Mammary epithelial cell (primary cell): ENCODE measurements at regions of chr9 and their contacts with region 1.

Region 1: GRCh38 chr9:129333953-129334724 is 156.1 kb upstream of the IER5L start:
- DNase-seq: peak; percentile 97
- H3K4me3 ChIP-seq: peak overlapping the region; percentile 31 to 41 (median 37)
- H3K27ac ChIP-seq: peak overlapping the region; percentile 88
- H3K4me1 ChIP-seq: peaks cover 48% of the 10 kb centered on the region
- H3K27me3 ChIP-seq: no peaks in the 10 kb centered on the region
- CTCF ChIP-seq: no peak

Region 2: DNA sequence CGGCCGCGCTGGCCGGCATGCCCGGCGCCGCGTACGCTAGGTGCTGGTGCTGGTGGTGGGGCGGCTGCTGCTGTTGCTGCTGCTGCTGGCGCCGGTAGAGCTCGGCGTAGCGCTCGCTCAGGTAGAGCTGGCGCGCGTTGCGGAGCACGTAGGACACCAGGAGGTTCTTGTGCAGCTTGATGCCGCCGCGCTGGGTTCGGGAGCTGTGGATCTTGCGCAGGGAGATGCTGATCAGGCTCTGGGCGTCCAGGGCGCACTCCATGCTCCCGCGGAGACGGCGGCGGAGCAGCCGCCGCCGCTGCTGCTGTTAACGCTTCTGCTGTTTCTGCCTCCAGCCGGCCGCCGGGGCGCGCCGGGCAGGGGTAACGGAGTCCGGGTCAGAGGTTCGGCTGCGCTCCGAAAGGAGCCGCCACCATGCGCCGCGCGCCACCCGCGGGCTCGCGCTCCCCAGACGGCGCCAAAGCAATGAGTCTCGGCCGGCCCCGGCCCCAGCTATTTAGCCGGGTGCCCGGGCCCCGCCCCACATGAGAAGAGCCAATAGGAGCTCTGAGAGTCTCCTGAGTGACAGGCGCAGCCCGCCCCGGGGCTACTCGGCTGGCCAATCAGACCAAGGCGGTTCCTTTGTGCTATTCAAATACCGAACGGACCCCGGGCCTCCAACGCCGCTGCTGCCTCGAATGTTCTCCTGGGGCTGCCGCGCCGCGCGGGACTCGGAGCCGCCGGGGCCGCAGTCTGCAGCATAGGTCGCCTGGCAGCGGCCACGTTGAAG is 156.2 kb before region 1 on chr9 and contains the start of gene IER5L:
- CTCF ChIA-PET with region 1: no interaction called
- dilution Hi-C with region 1: no loop called
- in situ Hi-C with region 1: loop called in 1 of 2 experiments (anchors 5 kb)
- intact Hi-C with region 1: loop called (anchors 1 kb)
- DNase-seq: peak; percentile 90
- H3K4me3 ChIP-seq: peak within 1 kb of the TSS; percentile 89 to 97 (median 97)
- H3K27ac ChIP-seq: no peak within 1 kb of the TSS
- H3K4me1 ChIP-seq: peaks cover 32% of the 10 kb centered on the region
- H3K27me3 ChIP-seq: no peaks in the 10 kb centered on the region
- CTCF ChIP-seq: peak in 1 of 2 donors; percentile 8
- total RNA-seq, gene IER5L: 13.5 to 34.2 TPM

Region 3: DNA sequence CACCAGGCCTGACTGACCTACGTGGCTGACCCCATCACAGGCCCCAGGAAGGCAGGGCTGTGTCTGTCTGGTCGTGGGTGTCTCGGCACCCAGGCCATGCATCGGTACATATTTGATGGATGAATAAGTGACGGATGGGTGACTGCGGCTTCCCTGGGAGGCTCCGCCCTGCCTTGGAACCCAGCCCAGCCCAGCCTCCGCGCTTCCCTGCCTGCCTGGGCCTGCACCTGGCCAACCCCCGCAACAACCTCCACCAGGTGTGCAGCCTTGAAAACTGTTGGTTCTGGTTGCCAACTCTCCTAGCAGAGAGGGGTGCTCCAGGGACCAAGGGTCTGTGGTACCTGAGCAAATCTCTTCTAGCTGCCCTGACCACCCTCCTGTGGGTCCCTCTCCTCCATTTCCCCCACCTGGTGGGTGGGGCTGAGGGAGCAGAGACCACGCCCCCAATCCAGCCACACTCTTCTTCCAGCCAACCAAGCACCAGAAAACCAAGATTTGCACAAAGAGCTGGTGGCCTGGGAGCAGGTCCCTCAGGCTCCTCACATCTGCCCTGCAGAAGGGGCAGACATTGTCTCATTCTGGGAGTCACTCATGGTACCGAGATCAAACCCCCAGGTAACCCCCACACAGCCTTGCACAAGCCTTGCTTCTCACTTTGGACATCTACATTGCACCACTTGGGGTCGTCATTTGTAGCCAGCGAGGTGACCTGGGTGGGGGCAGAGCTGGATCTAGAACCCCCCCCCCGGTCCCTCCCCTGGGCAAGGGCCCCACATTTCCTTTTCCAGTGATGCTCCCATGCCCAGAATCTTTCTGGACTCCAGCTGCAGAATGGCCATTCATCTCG is 55.5 kb before region 1 on chr9:
- CTCF ChIA-PET with region 1: no interaction called
- dilution Hi-C with region 1: no loop called
- in situ Hi-C with region 1: no loop called
- intact Hi-C with region 1: loop called (anchors 1 kb)
- DNase-seq: peak; percentile 90
- H3K4me3 ChIP-seq: peak overlapping the region in 1 of 3 experiments; percentile 24
- H3K27ac ChIP-seq: peak overlapping the region; percentile 48
- H3K4me1 ChIP-seq: peaks cover 29% of the 10 kb centered on the region
- H3K27me3 ChIP-seq: no peaks in the 10 kb centered on the region
- CTCF ChIP-seq: no peak

Region 4: DNA sequence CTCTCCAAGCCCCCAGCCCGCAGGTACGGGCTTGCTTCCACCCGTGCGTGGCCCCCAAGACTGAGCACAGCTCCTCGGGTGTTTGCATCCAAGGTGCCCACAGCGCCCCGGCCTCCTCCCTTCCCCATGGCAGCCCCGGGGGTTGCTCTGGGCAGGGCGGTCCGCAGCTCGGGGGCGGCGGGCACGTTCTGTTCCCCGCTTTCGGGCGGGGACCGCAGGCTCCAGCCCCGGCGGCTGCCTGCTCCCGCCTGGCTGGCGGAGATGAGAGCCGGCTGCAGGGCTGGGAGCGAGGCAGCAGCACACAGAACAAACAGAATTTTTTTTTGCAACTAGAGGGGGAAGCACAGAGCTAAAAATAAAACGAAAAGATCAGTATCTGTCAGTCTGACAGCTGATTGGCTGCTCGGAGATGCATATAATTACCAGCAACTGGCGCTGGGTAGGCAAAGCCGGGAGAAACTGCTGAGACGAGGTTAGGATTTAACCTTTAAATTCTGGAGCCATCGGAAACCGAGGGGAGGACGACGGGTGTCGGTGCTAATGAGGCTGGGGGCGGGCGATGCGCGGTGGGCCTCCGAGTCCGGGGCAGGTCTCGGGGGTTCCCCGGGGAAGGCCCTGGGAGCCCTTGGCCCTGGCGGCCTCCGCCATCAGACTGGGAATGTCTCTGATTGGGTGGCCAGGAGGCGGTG is 13.4 kb before region 1 on chr9:
- CTCF ChIA-PET with region 1: no interaction called
- dilution Hi-C with region 1: no loop called
- in situ Hi-C with region 1: no loop called
- intact Hi-C with region 1: no loop called
- DNase-seq: no peak
- H3K4me3 ChIP-seq: peak overlapping the region in 1 of 3 experiments; percentile 12
- H3K27ac ChIP-seq: no peak overlapping the region
- H3K4me1 ChIP-seq: peaks cover 14% of the 10 kb centered on the region
- H3K27me3 ChIP-seq: no peaks in the 10 kb centered on the region
- CTCF ChIP-seq: no peak

Region 5: DNA sequence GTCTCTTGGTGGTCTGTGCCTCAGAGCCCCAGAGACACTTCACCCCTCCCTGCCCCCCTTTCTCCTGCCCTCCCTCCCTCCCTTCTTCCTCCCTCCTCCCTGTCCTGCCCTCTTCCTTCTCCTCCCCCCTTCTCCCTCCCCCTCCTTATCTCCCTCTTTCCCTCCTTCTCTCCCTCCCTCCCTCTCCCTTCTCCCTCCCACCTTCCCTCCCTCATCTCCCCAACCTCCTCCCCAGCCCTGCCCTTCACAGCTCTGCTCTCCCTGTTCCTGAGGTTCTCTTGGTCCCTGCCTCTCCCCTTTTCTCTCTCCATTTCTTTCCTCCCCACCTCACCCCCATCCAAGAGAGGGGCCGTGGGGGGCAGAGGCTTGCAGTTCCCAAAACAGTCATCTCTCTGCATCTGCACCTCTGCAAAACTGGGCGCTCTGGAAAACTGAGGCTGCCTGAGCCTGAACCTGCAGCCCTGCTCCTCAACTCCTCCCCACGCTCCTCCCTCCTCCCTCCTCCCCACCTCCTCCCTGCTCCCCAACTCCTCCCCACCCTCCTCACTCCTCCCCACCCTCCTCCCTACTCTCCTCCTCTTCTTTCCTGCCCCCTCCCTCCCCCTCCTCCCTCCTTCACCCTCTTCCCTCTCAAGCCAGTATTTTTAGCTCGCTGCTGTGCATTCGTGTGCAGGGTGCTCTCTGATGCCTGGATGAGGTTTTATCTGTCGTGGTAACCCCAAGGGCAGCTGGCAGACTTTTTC is 67.7 kb after region 1 on chr9:
- CTCF ChIA-PET with region 1: no interaction called
- dilution Hi-C with region 1: loop called (anchors 5 kb)
- in situ Hi-C with region 1: no loop called
- intact Hi-C with region 1: no loop called
- DNase-seq: no peak
- H3K4me3 ChIP-seq: no peak overlapping the region
- H3K27ac ChIP-seq: no peak overlapping the region
- H3K4me1 ChIP-seq: no peaks in the 10 kb centered on the region
- H3K27me3 ChIP-seq: no peaks in the 10 kb centered on the region
- CTCF ChIP-seq: no peak

Region 6: GRCh38 chr9:129482521-129483414 is 148.6 kb after region 1 on chr9:
- CTCF ChIA-PET with region 1: no interaction called
- dilution Hi-C with region 1: no loop called
- in situ Hi-C with region 1: loop called in 1 of 2 experiments (anchors 5 kb)
- intact Hi-C with region 1: no loop called
- DNase-seq: peak; percentile 80
- H3K4me3 ChIP-seq: peak overlapping the region; percentile 29 to 46 (median 32)
- H3K27ac ChIP-seq: peak overlapping the region; percentile 95
- H3K4me1 ChIP-seq: peaks cover 43% of the 10 kb centered on the region
- H3K27me3 ChIP-seq: no peaks in the 10 kb centered on the region
- CTCF ChIP-seq: no peak

Region 7: GRCh38 chr9:129610473-129611301 is 276.5 kb after region 1 on chr9:
- CTCF ChIA-PET with region 1: no interaction called
- dilution Hi-C with region 1: loop called (anchors 25 kb)
- in situ Hi-C with region 1: loop called in 1 of 2 experiments (anchors 25 kb)
- intact Hi-C with region 1: loop called (anchors 2 kb)
- DNase-seq: peak; percentile 37
- H3K4me3 ChIP-seq: peak overlapping the region; percentile 52 to 62 (median 55)
- H3K27ac ChIP-seq: no peak overlapping the region
- H3K4me1 ChIP-seq: peaks cover 22% of the 10 kb centered on the region
- H3K27me3 ChIP-seq: no peaks in the 10 kb centered on the region
- CTCF ChIP-seq: peak; percentile 80 to 81